CD8-positive, alpha-beta T cell (primary cell): ENCODE measurements at regions of chr7 and their contacts with region 1.

Region 1: GRCh38 chr7:135274495-135275268 is 41.0 kb downstream of the STRA8 start:
- DNase-seq: peak; percentile 51 to 77 (median 70)
- ATAC-seq: peak; percentile 82
- H3K4me3 ChIP-seq: no peak overlapping the region
- H3K4me3 Mint-ChIP-seq: no peak overlapping the region
- H3K27ac ChIP-seq: no peak overlapping the region
- H3K27ac Mint-ChIP-seq: no peak overlapping the region
- H3K4me1 ChIP-seq: peaks cover 2% of the 10 kb centered on the region
- H3K4me1 Mint-ChIP-seq: no peaks in the 10 kb centered on the region
- H3K27me3 ChIP-seq: no peaks in the 10 kb centered on the region
- H3K27me3 Mint-ChIP-seq: peaks cover 7% of the 10 kb centered on the region
- CTCF ChIP-seq: peak; percentile 96

Region 2: DNA sequence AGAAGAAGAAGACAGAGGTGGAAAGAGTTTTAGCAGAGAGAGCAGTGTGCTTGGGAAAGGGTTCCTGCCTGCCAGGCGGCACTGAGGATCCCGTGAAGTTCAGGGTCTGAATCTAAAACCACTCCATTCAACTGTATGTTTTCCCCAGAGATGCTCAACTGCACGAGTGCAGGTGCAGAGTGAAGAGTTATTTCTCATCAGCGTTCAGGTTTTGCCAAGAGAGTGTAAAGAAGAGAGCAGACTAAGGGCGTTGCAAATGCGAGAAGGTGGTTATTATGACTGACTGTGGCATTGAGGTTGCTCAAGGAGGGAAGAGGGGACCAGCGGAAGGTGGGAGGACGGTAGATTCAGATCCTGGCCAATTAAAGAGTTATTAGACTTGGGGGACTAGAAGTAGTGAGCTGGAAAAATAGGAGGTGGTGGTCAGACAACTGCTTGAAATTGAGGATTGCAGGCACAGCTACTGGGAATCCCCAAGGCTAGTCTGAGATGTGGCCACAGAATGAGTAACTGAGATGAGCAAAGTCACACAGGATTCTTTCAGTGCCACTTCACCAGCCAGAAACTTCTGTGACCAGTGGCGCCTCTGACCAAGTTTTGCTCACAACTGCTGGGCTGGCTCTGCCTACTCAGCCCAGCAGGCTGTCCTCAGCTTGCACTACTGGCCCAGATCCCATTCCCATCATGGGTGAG is 11.9 kb before region 1 on chr7:
- CTCF ChIA-PET with region 1: interaction called, 29 read pairs
- POLR2A ChIA-PET with region 1: no interaction called
- intact Hi-C with region 1: no loop called
- DNase-seq: no peak
- ATAC-seq: no peak
- H3K4me3 ChIP-seq: no peak overlapping the region
- H3K4me3 Mint-ChIP-seq: no peak overlapping the region
- H3K27ac ChIP-seq: no peak overlapping the region
- H3K27ac Mint-ChIP-seq: no peak overlapping the region
- H3K4me1 ChIP-seq: no peaks in the 10 kb centered on the region
- H3K4me1 Mint-ChIP-seq: no peaks in the 10 kb centered on the region
- H3K27me3 ChIP-seq: no peaks in the 10 kb centered on the region
- H3K27me3 Mint-ChIP-seq: peaks cover 6% of the 10 kb centered on the region
- CTCF ChIP-seq: no peak

Region 3: GRCh38 chr7:135645296-135645904 is 370.7 kb after region 1 on chr7:
- CTCF ChIA-PET with region 1: interaction called, 54 read pairs
- POLR2A ChIA-PET with region 1: no interaction called
- intact Hi-C with region 1: no loop called
- DNase-seq: peak in 3 of 9 experiments; percentile 21 to 59 (median 52)
- ATAC-seq: peak; percentile 83
- H3K4me3 ChIP-seq: no peak overlapping the region
- H3K4me3 Mint-ChIP-seq: no peak overlapping the region
- H3K27ac ChIP-seq: no peak overlapping the region
- H3K27ac Mint-ChIP-seq: no peak overlapping the region
- H3K4me1 ChIP-seq: no peaks in the 10 kb centered on the region
- H3K4me1 Mint-ChIP-seq: no peaks in the 10 kb centered on the region
- H3K27me3 ChIP-seq: no peaks in the 10 kb centered on the region
- H3K27me3 Mint-ChIP-seq: no peaks in the 10 kb centered on the region
- CTCF ChIP-seq: peak; percentile 79